GM10248 (cell line): ENCODE measurements at regions of chr4 and their contacts with region 1.

Region 1: GRCh38 chr4:77095101-77095821 is 19.5 kb upstream of the CCNI start:
- DNase-seq: peak; percentile 69
- CTCF ChIP-seq: peak; percentile 80

Region 2: DNA sequence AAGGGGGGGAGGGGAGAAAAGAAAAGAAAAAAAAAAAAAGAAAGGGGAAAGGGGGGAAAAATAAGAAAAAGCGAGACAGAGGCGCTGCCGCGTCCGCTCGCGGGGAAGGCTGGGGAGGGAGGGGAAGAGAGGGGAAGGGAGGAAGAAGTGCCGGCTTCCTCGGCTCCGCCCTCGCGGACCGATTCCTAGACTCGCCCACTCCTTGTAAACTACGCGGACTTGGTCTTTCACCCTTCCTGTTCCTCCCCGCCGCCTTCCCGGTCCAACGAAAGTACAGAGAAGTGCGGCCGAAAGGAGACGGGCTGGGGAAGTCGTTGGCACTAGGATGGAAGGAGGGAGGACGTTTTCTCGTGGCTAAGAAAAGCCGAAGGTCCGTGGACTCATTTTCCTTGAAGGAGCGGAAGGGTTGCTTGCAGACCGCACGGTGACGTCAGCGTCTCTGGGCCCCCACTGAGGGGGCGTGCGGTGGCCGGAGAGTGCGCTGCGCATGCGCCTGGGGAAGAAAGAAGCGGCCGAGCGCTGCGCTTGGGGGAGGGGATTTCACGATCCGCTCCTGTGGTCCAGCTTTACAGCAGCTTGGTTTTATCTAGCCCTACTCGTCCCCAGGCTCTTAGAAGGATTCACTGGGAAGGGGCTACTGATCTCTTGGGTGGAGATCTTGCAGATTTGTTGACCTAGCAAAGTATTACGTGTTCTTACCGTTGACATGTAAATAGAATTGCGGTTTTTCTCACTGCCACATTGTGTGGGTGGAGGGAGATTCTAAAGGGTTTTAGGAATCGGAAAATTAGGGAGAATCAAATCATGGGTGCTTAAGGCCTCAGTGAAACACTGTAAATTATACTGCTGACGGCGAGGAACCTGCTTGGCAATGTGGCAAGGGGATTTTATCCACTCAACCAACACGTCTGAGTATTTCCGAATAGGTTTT is 19.1 kb before region 1 on chr4 and contains the start of gene CCNI:
- CTCF ChIA-PET with region 1: interaction called, 69 read pairs
- POLR2A ChIA-PET with region 1: interaction called, 4 read pairs
- DNase-seq: peak; percentile 91
- CTCF ChIP-seq: no peak

Region 3: GRCh38 chr4:77126809-77127208 is 31.5 kb after region 1 on chr4:
- CTCF ChIA-PET with region 1: interaction called, 15 read pairs
- POLR2A ChIA-PET with region 1: no interaction called
- DNase-seq: peak; percentile 61
- CTCF ChIP-seq: no peak

Region 4: GRCh38 chr4:77146186-77147078 is 51.2 kb after region 1 on chr4:
- CTCF ChIA-PET with region 1: interaction called, 13 read pairs
- POLR2A ChIA-PET with region 1: no interaction called
- DNase-seq: no peak
- CTCF ChIP-seq: no peak

Region 5: GRCh38 chr4:77193511-77194102 is 98.3 kb after region 1 on chr4:
- CTCF ChIA-PET with region 1: interaction called, 275 read pairs
- POLR2A ChIA-PET with region 1: no interaction called
- DNase-seq: peak; percentile 88
- CTCF ChIP-seq: no peak